ENCODE measurements at regions of chr11 and their contacts with region 1.

Region 1: GRCh38 chr11:119999220-119999619 is 138.7 kb downstream of the TRIM29 start:
- DNase-seq: peak; percentile 23
- H3K27ac ChIP-seq: no peak overlapping the region
- CTCF ChIP-seq: peak; percentile 49

Region 2: GRCh38 chr11:120024046-120024445 is 24.8 kb after region 1 on chr11:
- CTCF ChIA-PET with region 1: no interaction called
- POLR2A ChIA-PET with region 1: no interaction called
- DNase-seq: peak; percentile 14
- H3K27ac ChIP-seq: no peak overlapping the region
- CTCF ChIP-seq: no peak

Region 3: GRCh38 chr11:120108154-120108865 is 109.1 kb after region 1 on chr11:
- CTCF ChIA-PET with region 1: interaction called, 12 read pairs
- POLR2A ChIA-PET with region 1: no interaction called
- DNase-seq: peak; percentile 93
- H3K27ac ChIP-seq: peak overlapping the region; percentile 98
- CTCF ChIP-seq: peak; percentile 99